Activated CD4-positive, alpha-beta memory T cell treated with anti-CD3 and anti-CD28 coated beads for 36 hours (primary cell): ENCODE measurements at regions of chr3 and their contacts with region 1.

Region 1: DNA sequence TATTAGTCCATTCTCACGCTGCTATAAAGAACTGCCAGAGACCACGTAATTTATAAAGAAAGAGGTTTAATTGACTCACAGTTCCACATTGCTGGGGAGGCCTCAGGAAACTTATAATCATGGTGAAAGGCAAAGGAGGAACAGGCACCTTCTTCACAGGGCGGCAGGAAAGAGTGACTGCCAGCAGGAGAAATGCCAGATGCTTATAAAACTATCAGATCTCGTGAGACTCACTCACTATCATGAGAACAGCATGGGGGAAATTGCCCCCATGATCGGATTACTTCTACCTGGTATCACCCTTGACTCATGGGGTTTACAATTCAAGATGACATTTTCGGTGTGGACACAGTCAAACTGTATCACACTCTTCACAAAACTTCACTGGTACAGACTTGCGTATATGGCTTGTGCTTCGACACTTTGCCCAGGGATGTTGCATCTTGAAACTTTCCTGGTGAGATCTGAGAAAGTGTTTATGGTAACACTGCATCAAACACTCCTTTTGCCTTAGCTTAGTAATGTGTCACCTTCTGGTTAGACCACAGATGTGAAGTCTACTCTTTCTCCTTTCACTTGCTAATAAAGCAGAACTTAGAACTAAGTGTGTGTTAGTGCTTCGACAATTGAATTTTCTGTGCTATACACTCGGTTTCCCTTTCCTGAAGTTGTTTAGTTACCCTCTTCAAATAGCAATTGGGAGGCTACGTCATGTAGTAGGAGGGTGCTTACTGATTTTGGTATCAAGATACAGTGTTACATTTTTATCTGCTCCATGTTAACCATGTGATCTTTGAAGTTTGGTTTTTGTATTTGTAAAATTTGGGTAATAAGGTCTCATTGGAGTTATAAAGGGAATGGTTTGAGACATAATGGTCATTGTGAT is 185.7 kb downstream of the LPP start:
- DNase-seq: peak; percentile 75
- H3K4me3 Mint-ChIP-seq: peak overlapping the region; percentile 68
- H3K27ac Mint-ChIP-seq: peak overlapping the region; percentile 93
- H3K4me1 Mint-ChIP-seq: peaks cover 44% of the 10 kb centered on the region
- H3K27me3 Mint-ChIP-seq: peaks cover 2% of the 10 kb centered on the region

Region 2: DNA sequence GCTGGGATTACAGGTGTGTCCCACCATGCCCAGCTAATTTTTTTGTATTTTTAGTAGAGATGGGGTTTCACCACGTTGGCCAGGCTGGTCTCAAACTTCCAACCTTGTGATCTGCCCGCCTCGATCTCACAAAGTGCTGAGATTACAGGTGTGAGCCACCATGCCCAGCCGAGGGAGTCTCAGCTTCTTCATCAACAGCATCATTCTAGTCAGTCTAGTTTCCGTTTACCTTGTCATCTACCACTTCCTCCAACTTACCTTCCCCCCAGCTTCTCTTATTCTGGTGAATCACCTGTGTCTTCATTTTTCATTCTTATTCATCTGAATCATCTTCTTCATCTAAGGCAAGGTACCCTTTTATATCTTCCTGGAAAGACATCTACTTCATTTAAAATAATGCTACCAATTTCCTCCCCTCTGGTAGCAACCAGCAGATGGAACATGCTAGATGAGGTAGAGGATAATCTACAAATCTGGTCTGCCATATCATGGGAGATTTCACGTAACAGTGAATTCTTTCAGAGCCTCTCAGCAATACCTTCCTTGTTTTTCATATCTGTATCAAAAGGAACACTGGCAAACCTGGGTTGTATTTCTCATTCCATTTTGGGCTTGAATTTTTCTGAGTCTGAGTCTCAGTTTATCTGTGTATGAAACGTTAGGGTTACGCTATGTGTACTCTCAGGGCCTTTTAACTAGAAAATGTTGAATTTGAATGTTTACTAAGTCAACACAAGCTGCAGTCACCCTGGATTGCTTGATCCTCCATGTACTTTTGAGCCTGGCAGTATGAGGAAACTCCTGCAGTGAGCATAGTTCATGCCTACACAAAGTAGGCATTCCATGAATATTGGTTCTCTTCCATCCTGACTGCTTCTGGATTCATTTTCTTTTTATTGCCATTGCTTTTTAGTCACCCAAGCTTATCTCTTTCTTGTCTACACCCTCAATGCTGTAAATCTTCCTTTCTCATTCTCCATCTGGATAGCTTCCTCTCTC is 168.9 kb before region 1 on chr3:
- CTCF ChIA-PET with region 1: no interaction called
- POLR2A ChIA-PET with region 1: no interaction called
- intact Hi-C with region 1: loop called (anchors 1 kb)
- DNase-seq: peak; percentile 82
- H3K4me3 Mint-ChIP-seq: peak overlapping the region; percentile 28
- H3K27ac Mint-ChIP-seq: peak overlapping the region; percentile 89
- H3K4me1 Mint-ChIP-seq: peaks cover 58% of the 10 kb centered on the region
- H3K27me3 Mint-ChIP-seq: no peaks in the 10 kb centered on the region

Region 3: DNA sequence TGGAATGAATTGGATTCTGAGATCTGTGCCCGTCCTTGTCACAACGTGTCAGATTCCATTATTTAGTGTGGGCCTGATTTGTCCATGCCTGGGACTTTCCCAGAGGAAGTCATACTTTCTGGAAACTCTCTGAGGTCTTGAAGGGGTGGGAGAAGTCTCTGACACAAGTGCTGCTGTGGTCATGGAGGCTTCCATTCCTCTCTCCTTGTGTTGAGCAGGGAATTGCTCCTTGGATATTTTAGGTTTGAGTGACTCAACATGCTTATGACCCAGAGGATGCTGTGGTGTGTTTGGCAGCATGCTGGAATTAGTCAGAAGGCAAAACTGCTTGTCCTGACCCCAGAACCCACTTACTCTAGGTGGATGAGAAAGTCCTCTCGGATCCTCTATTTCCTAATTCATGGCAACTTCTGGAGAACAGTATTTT is 53.6 kb before region 1 on chr3:
- CTCF ChIA-PET with region 1: no interaction called
- POLR2A ChIA-PET with region 1: interaction called, 3 read pairs
- intact Hi-C with region 1: loop called (anchors 1 kb)
- DNase-seq: peak; percentile 42
- H3K4me3 Mint-ChIP-seq: no peak overlapping the region
- H3K27ac Mint-ChIP-seq: peak overlapping the region; percentile 34
- H3K4me1 Mint-ChIP-seq: peaks cover 51% of the 10 kb centered on the region
- H3K27me3 Mint-ChIP-seq: no peaks in the 10 kb centered on the region

Region 4: DNA sequence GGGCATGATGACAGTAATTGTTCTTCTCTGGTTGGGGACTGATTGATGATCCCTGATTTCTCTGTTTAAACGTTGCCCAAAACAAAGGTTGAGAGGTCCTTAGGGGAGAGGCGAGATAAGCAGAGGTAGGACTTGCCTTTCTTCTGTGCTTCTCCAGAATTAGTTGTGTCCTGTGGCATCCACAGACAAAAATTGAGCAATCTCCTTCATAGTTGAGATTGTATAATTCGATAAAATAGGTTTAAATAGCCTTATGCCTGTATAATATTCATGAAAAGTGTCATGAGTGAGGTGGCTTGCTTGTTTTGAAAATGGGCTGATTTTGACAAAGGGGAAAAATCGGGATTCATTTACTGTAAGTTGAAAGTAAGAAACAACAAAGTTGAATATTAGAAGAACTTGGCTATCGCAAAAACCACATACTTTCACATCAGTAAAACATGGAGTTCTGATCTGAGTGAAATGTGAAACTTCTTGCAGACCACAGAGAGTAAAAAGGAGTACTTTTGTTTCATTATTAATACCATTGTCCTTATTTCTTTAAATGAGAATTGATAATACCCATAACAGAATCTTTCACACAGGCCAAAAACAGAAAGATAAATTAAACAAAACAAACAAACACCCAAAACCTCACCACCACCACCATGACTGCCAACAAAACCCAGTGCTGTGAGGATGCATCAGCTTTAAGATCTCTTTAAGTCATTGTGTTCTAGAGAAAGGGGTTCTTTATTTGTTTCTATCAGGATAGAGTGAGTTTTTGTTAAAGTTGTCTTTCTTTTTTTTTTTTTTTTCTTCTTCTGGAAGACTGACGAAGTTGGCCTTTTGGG is 30.0 kb before region 1 on chr3:
- CTCF ChIA-PET with region 1: interaction called, 3 read pairs
- POLR2A ChIA-PET with region 1: no interaction called
- intact Hi-C with region 1: loop called (anchors 1 kb)
- DNase-seq: peak; percentile 49
- H3K4me3 Mint-ChIP-seq: peak overlapping the region; percentile 34
- H3K27ac Mint-ChIP-seq: peak overlapping the region; percentile 64
- H3K4me1 Mint-ChIP-seq: peaks cover 22% of the 10 kb centered on the region
- H3K27me3 Mint-ChIP-seq: no peaks in the 10 kb centered on the region

Region 5: GRCh38 chr3:188389711-188390342 is 50.2 kb after region 1 on chr3:
- CTCF ChIA-PET with region 1: no interaction called
- POLR2A ChIA-PET with region 1: no interaction called
- intact Hi-C with region 1: loop called (anchors 1 kb)
- DNase-seq: peak; percentile 74
- H3K4me3 Mint-ChIP-seq: no peak overlapping the region
- H3K27ac Mint-ChIP-seq: peak overlapping the region; percentile 50
- H3K4me1 Mint-ChIP-seq: peaks cover 27% of the 10 kb centered on the region
- H3K27me3 Mint-ChIP-seq: no peaks in the 10 kb centered on the region

Region 6: GRCh38 chr3:188584162-188584529 is 244.5 kb after region 1 on chr3:
- CTCF ChIA-PET with region 1: no interaction called
- POLR2A ChIA-PET with region 1: no interaction called
- intact Hi-C with region 1: loop called (anchors 1 kb)
- DNase-seq: peak; percentile 31
- H3K4me3 Mint-ChIP-seq: no peak overlapping the region
- H3K27ac Mint-ChIP-seq: no peak overlapping the region
- H3K4me1 Mint-ChIP-seq: peaks cover 13% of the 10 kb centered on the region
- H3K27me3 Mint-ChIP-seq: no peaks in the 10 kb centered on the region

Region 7: DNA sequence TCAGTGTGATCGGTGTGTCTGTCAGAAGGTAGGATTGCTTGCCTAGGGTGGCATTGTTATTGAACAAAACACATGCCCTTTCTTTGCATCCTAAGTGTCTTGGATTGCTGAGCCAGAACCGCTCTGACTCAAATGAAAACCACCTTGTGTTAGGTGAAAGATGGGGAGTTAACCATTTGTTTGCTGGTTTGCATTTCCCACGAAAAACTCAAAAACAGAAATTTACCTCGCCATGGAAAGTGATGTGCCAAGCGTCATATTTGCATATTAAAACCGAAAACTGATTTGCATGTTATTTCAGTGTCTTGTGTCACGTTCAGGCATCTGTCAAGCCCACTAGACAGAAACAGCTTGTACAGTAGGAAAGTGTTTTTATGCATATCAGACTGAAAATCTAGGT is 357.5 kb after region 1 on chr3:
- CTCF ChIA-PET with region 1: no interaction called
- POLR2A ChIA-PET with region 1: no interaction called
- intact Hi-C with region 1: loop called (anchors 1 kb)
- DNase-seq: peak; percentile 55
- H3K4me3 Mint-ChIP-seq: no peak overlapping the region
- H3K27ac Mint-ChIP-seq: peak overlapping the region; percentile 7
- H3K4me1 Mint-ChIP-seq: peaks cover 50% of the 10 kb centered on the region
- H3K27me3 Mint-ChIP-seq: peaks cover 7% of the 10 kb centered on the region